Esophagus muscularis mucosa (tissue), 4 donors: ENCODE measurements at regions of chr3 and their contacts with region 1.

Region 1: DNA sequence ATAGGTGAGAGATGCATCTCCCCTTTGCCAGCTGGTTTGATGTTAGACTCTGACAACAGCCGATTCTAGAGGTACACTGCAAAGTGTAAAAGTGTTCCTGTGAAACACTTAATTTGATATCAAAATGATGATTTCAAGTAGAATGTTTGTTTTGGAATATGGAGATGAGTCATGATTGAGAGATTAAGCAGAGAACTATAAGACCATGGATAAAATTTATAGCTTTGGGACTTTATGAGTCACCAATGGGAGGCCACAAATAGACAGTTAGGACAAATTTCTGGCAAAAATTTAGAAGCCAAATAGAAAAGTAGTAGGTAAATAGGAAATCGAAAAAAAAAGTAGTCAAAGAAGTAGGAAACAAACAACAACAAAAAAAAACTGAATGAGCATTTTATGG is 672.5 kb downstream of the NSUN3 start:
- DNase-seq: no peak
- H3K4me3 ChIP-seq: no peak overlapping the region
- H3K27ac ChIP-seq: no peak overlapping the region
- H3K4me1 ChIP-seq: peaks cover 0 to 4% (median 0%) of the 10 kb centered on the region in 4 donors
- H3K27me3 ChIP-seq: no peaks in the 10 kb centered on the region
- CTCF ChIP-seq: no peak
- EP300 ChIP-seq: no peak
- POLR2A ChIP-seq: no peak

Region 2: DNA sequence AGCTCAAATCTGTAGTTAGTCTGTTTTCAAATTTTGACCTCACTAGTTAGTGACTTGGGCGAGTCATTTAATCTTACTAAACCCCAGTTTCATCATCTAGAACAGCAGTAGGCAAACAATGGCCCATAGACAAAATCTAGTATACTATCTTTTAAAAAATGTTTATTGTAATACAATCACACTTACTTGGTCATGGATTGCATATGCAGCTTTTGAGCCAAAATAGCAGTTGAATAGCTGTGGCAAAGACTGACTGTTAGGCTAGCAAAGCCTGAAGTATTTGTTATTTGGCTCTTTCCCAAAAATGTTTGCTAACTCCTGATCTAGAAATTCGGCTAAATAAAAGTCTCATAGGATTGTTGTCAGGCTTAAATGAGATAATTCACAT is 321.6 kb before region 1 on chr3:
- intact Hi-C with region 1: loop called (anchors 10 kb)
- DNase-seq: no peak
- H3K4me3 ChIP-seq: no peak overlapping the region
- H3K27ac ChIP-seq: no peak overlapping the region
- H3K4me1 ChIP-seq: peaks cover 0 to 10% (median 8%) of the 10 kb centered on the region in 4 donors
- H3K27me3 ChIP-seq: no peaks in the 10 kb centered on the region
- CTCF ChIP-seq: no peak
- EP300 ChIP-seq: no peak
- POLR2A ChIP-seq: no peak

Region 3: GRCh38 chr3:94643400-94643799 is 92.0 kb before region 1 on chr3:
- intact Hi-C with region 1: no loop called
- DNase-seq: no peak
- H3K4me3 ChIP-seq: no peak overlapping the region
- H3K27ac ChIP-seq: no peak overlapping the region
- H3K4me1 ChIP-seq: no peaks in the 10 kb centered on the region
- H3K27me3 ChIP-seq: no peaks in the 10 kb centered on the region
- CTCF ChIP-seq: no peak
- EP300 ChIP-seq: no peak
- POLR2A ChIP-seq: no peak

Region 4: DNA sequence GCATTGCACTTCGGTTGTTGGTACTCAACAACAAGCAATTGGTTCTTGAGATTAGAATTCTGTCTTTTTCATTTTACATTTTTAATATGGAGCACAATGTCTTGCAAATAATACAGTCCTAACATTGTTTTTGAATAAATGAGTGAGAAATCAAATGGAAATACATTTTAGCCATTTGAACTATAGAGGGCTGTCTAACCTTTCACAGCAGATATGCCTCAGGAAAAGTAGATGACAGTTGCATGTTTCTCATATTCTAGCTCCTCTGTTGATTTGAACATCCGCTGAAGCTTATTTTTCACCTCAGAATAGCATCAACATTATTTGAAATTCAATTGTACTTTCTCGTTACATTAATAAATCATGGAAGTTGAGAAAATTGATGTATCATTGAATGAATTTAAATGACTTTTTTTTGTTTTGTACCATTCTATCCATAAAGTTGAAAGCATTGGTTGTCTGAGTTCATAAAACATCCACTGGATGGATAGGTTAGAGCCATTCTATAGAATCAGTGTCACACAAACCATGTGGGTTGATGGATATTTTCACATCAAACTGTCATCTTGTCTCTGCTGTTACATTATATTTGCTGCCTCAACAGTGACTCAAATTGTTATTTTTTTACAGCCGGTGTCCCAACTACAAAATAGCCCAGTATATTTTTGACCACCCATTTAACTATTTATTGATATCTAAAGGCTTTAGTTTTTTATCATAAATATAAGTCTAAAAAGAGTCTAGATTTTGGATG is 255.8 kb after region 1 on chr3:
- intact Hi-C with region 1: no loop called
- DNase-seq: no peak
- H3K4me3 ChIP-seq: no peak overlapping the region
- H3K27ac ChIP-seq: no peak overlapping the region
- H3K4me1 ChIP-seq: no peaks in the 10 kb centered on the region
- H3K27me3 ChIP-seq: no peaks in the 10 kb centered on the region
- CTCF ChIP-seq: no peak
- EP300 ChIP-seq: no peak
- POLR2A ChIP-seq: no peak